Activated CD4-positive, alpha-beta T cell treated with anti-CD3 and anti-CD28 coated beads for 36 hours (primary cell): ENCODE measurements at regions of chr12 and their contacts with region 1.

Region 1: GRCh38 chr12:115998119-115998633 is 279.3 kb downstream of the MED13L start:
- DNase-seq: no peak
- ATAC-seq: peak; percentile 39
- H3K4me3 Mint-ChIP-seq: no peak overlapping the region
- H3K27ac Mint-ChIP-seq: no peak overlapping the region
- H3K4me1 Mint-ChIP-seq: peaks cover 10% of the 10 kb centered on the region
- H3K27me3 Mint-ChIP-seq: no peaks in the 10 kb centered on the region

Region 2: DNA sequence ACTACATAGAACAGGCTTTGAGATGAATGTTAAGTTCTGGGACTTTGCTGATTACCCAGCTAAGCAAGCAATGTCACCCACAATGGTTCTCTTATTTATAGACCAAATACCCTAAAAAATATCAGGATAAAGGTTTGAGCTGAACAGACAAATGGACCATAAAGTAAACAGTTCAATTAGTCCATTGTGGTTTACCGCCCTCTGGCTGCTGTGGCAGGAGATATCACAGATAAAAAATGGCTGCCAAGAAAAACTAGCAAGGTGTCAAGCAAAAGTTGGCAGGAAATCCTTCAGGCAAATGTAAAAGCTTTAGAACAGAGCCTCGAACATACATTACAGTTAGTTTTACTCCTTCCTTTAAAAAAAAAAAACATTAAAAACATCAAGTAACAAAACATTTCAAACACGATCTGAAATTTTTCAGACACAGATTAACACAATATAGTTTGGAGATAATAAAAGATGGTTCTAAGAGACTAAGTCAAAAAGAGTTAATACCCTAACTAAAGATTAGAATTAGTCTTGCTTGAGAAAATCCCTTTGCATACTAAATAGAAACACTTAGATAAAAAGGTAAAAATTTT is 238.1 kb after region 1 on chr12:
- CTCF ChIA-PET with region 1: interaction called, 5 read pairs
- POLR2A ChIA-PET with region 1: no interaction called
- intact Hi-C with region 1: loop called (anchors 1 to 2 kb)
- DNase-seq: peak; percentile 66
- ATAC-seq: peak; percentile 60
- H3K4me3 Mint-ChIP-seq: peak overlapping the region; percentile 14
- H3K27ac Mint-ChIP-seq: peak overlapping the region; percentile 63
- H3K4me1 Mint-ChIP-seq: peaks cover 35% of the 10 kb centered on the region
- H3K27me3 Mint-ChIP-seq: no peaks in the 10 kb centered on the region

Region 3: GRCh38 chr12:116599285-116600136 is 601.3 kb after region 1 on chr12:
- CTCF ChIA-PET with region 1: interaction called, 7 read pairs
- POLR2A ChIA-PET with region 1: no interaction called
- intact Hi-C with region 1: loop called (anchors 1 to 5 kb)
- DNase-seq: peak; percentile 82
- ATAC-seq: peak; percentile 72
- H3K4me3 Mint-ChIP-seq: no peak overlapping the region
- H3K27ac Mint-ChIP-seq: no peak overlapping the region
- H3K4me1 Mint-ChIP-seq: peaks cover 18% of the 10 kb centered on the region
- H3K27me3 Mint-ChIP-seq: no peaks in the 10 kb centered on the region

Region 4: DNA sequence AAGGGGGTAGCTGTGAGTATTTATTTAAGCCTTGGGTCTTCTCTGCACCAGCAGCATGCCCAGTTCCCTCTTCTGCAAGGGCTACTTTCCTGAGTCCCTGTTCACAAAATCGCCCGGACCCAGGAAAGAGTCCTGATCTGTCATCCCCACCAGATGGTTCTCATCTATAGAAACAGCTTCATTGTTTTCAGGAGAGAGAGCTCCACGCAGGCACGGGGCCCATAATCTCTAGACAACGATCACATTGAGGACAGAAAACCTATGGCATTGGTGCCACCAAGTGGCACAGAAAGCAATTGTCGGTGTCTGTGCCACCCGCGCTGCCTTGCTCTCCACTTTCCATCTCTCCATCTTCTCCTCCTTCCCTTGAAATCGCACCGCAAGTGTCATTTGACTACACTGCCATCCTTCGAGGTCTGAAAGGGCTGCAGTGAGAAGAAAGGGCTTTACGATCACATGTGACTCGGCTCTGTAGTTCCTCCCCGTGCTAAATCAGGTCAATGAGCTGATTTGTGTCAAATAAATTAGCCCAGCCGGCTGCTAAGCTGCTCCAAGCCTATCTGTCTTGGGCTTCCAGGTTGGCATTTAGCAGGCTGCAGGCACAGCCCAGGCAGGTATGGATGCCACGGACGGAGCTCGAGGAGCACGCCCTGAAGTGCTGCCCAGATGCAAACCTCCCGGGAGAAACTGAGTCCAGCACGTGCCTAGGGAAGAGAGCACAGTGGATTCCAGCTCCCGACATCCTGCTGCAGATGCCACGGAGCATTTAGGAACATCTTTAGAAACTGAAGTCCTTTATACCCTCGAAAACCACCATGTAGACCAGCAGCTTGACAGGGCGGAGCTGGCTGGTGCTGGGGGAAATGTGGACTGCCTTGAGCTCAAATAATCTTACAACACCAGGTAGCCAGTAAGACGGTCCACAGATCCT is 710.9 kb after region 1 on chr12:
- CTCF ChIA-PET with region 1: interaction called, 26 read pairs
- POLR2A ChIA-PET with region 1: no interaction called
- intact Hi-C with region 1: loop called in 1 of 2 experiments (anchors 5 kb)
- DNase-seq: peak; percentile 70
- ATAC-seq: peak; percentile 98
- H3K4me3 Mint-ChIP-seq: no peak overlapping the region
- H3K27ac Mint-ChIP-seq: no peak overlapping the region
- H3K4me1 Mint-ChIP-seq: peaks cover 9% of the 10 kb centered on the region
- H3K27me3 Mint-ChIP-seq: no peaks in the 10 kb centered on the region